AG04450 (cell line): ENCODE measurements at regions of chr7 and their contacts with region 1.

Region 1: GRCh38 chr7:124784879-124785818 is 19.6 kb upstream of the GPR37 start:
- DNase-seq: peak; percentile 65
- H3K4me3 ChIP-seq: no peak overlapping the region
- H3K27ac ChIP-seq: no peak overlapping the region
- H3K27me3 ChIP-seq: no peaks in the 10 kb centered on the region
- CTCF ChIP-seq: peak; percentile 95

Region 2: DNA sequence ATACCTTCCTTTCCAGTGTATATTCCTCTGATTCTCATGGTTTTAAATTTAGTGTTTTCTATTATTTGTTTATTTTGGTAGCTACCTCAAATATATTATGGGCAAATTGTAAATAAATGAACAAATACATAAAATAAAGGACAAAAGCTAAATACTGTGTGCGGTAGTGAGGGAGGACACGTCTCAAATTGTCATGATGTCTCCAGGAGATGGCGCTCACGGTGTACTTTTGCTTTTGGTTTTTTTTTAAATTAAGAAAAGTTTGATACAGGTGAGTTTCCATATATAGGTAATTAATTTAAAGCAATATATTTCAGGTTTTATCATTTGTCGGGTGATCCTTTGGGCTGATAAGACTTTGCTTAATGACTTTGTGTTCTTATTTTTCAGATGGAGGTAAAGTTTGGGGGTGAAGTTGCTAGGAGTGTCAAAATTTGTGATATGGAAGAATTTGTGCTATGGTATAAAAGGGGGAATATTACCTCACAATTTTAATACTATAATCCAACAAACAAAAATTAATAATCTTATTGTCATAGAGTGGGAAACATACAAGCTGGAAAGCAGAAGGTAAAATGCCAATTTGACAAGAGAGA is 683.9 kb before region 1 on chr7:
- CTCF ChIA-PET with region 1: interaction called, 27 read pairs
- POLR2A ChIA-PET with region 1: no interaction called
- DNase-seq: no peak
- H3K4me3 ChIP-seq: no peak overlapping the region
- H3K27ac ChIP-seq: no peak overlapping the region
- H3K27me3 ChIP-seq: no peaks in the 10 kb centered on the region
- CTCF ChIP-seq: peak; percentile 58

Region 3: GRCh38 chr7:124171068-124171467 is 614.1 kb before region 1 on chr7:
- CTCF ChIA-PET with region 1: interaction called, 100 read pairs
- POLR2A ChIA-PET with region 1: no interaction called
- DNase-seq: peak; percentile 37
- H3K4me3 ChIP-seq: no peak overlapping the region
- H3K27ac ChIP-seq: no peak overlapping the region
- H3K27me3 ChIP-seq: no peaks in the 10 kb centered on the region
- CTCF ChIP-seq: peak; percentile 77

Region 4: DNA sequence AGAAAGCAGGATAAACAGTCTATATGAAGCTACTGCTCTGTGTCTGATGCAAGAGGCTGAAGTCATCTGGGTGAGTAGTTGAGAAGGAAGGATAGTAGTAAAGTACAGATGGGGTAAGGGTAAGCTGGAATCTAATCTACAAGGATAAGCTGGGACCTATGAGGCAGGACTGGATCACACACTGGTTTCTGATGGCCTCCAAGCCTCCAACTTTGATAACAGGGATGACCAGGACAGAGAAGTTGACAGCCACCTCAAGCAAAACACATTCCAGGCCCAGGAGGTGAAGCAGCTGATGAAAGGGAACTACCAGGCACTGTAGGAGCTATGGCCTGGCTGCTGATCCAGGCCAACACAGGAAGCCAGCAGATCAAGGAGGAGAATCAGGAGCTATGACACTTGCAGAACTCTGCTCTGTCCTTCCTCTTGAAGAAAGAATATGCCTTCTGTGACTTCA is 474.2 kb before region 1 on chr7:
- CTCF ChIA-PET with region 1: interaction called, 10 read pairs
- POLR2A ChIA-PET with region 1: no interaction called
- DNase-seq: peak; percentile 10
- H3K4me3 ChIP-seq: no peak overlapping the region
- H3K27ac ChIP-seq: no peak overlapping the region
- H3K27me3 ChIP-seq: no peaks in the 10 kb centered on the region
- CTCF ChIP-seq: no peak